ENCODE measurements at regions of chr4 and their contacts with region 1.

Region 1: DNA sequence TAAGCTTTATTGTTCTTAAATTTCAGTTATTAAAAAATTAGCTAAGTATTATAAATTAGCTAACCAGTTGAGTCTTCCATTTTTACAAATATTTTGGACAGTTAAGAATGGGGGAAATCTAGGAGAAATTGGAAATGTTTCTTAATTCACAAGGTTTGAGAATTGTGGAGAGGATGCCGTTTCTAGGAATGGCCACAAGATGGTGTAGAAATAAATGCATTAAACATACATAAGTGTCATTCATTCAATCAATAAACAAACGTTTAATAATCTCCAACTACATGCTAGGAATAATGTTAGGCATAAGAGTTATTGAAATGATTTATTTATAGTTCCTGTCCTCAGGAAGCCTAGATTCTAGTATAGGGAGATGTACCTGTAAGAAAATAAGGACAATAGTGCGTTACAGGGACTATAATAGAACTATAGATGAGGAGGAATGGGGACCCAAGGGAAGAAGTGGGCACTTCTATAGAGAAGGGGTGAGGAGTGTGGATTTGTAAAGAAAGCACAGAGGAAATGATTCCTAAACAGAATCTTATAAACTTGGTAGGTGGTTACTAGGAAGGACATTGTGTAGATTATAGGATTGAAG is 195.7 kb upstream of the ANK2 start:
- DNase-seq: no peak
- H3K4me3 ChIP-seq: no peak overlapping the region
- H3K27ac ChIP-seq: no peak overlapping the region
- H3K4me1 ChIP-seq: peaks cover 0 to 6% (median 4%) of the 10 kb centered on the region in 4 experiments; a peak in 3 of 7 replicates
- H3K27me3 ChIP-seq: no peaks in the 10 kb centered on the region
- CTCF ChIP-seq: peak in 1 of 3 experiments; percentile 48; a peak in 2 of 4 replicates
- EP300 ChIP-seq: no peak
- POLR2A ChIP-seq: no peak
- RAD21 ChIP-seq: peak; percentile 34 to 36; a peak in 3 of 4 replicates

Region 2: GRCh38 chr4:112801341-112801740 is 52.4 kb before region 1 on chr4:
- CTCF ChIA-PET with region 1: no interaction called
- POLR2A ChIA-PET with region 1: no interaction called
- DNase-seq: no peak
- H3K4me3 ChIP-seq: no peak overlapping the region
- H3K27ac ChIP-seq: no peak overlapping the region
- H3K4me1 ChIP-seq: no peaks in the 10 kb centered on the region
- H3K27me3 ChIP-seq: no peaks in the 10 kb centered on the region
- CTCF ChIP-seq: no peak
- EP300 ChIP-seq: no peak
- POLR2A ChIP-seq: no peak
- RAD21 ChIP-seq: no peak

Region 3: GRCh38 chr4:112876316-112876715 is 22.6 kb after region 1 on chr4:
- CTCF ChIA-PET with region 1: interaction called, 14 read pairs
- POLR2A ChIA-PET with region 1: no interaction called
- DNase-seq: no peak
- H3K4me3 ChIP-seq: no peak overlapping the region
- H3K27ac ChIP-seq: no peak overlapping the region
- H3K4me1 ChIP-seq: peaks cover 0 to 3% (median 0%) of the 10 kb centered on the region in 4 experiments; a peak in 1 of 7 replicates
- H3K27me3 ChIP-seq: no peaks in the 10 kb centered on the region
- CTCF ChIP-seq: no peak
- EP300 ChIP-seq: no peak
- POLR2A ChIP-seq: no peak
- RAD21 ChIP-seq: no peak